GM12878 (cell line): ENCODE measurements at regions of chr2 and their contacts with region 1.

Region 1: DNA sequence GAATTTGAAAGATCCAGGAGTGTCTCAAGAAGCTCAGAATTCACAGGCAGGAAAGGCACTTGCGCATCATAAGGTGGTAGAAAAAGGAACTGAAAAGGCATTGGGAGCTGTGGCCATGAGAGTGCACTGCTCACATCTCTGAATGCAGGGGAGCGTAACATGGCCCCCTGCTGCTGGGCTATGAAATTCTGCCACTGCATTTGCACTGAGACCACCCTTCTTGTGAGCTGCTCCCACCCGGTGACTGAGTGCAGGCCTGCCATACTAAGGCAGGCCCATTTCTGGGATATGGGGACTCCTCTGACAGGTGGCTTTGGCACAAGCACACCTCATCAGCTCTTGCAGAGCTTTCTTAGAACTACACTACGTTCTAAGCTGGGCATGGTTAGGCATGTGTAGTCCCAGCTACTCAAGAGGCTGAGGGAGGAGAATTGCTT is 25.3 kb upstream of the STARD7 start:
- DNase-seq: peak; percentile 68
- ATAC-seq: peak; percentile 99
- H3K4me3 ChIP-seq: no peak overlapping the region
- H3K27ac ChIP-seq: peak overlapping the region; percentile 50
- H3K4me1 ChIP-seq: peaks cover 21% of the 10 kb centered on the region
- H3K27me3 ChIP-seq: no peaks in the 10 kb centered on the region
- CTCF ChIP-seq: peak; percentile 44 to 51 (median 46); a peak in 5 of 6 replicates
- EP300 ChIP-seq: peak in 1 of 2 experiments; percentile 51; a peak in 1 of 4 replicates
- POLR2A ChIP-seq: no peak
- RAD21 ChIP-seq: peak; percentile 48

Region 2: GRCh38 chr2:96157651-96158553 is 76.0 kb before region 1 on chr2:
- CTCF ChIA-PET with region 1: no interaction called
- POLR2A ChIA-PET with region 1: interaction called, 11 read pairs
- RAD21 ChIA-PET with region 1: interaction called, 5 read pairs
- SMC1A ChIA-PET with region 1: interaction called, 4 read pairs
- in situ Hi-C with region 1: no loop called
- intact Hi-C with region 1: no loop called
- DNase-seq: peak; percentile 76
- ATAC-seq: peak; percentile 80
- H3K4me3 ChIP-seq: peak overlapping the region; percentile 21; the same call in 1 of the 2 replicates
- H3K27ac ChIP-seq: peak overlapping the region; percentile 95
- H3K4me1 ChIP-seq: peaks cover 60% of the 10 kb centered on the region
- H3K27me3 ChIP-seq: no peaks in the 10 kb centered on the region
- CTCF ChIP-seq: no peak
- EP300 ChIP-seq: peak; percentile 93 to 95
- POLR2A ChIP-seq: peak; percentile 80
- RAD21 ChIP-seq: peak; percentile 22; the same call in 1 of the 2 replicates

Region 3: GRCh38 chr2:96180521-96180920 is 53.4 kb before region 1 on chr2:
- CTCF ChIA-PET with region 1: interaction called, 27 read pairs
- POLR2A ChIA-PET with region 1: interaction called, 3 read pairs
- RAD21 ChIA-PET with region 1: interaction called, 34 read pairs
- SMC1A ChIA-PET with region 1: interaction called, 34 read pairs
- in situ Hi-C with region 1: no loop called
- intact Hi-C with region 1: no loop called
- DNase-seq: no peak
- ATAC-seq: no peak
- H3K4me3 ChIP-seq: no peak overlapping the region
- H3K27ac ChIP-seq: no peak overlapping the region
- H3K4me1 ChIP-seq: peaks cover 6% of the 10 kb centered on the region
- H3K27me3 ChIP-seq: no peaks in the 10 kb centered on the region
- CTCF ChIP-seq: no peak
- EP300 ChIP-seq: no peak
- POLR2A ChIP-seq: no peak
- RAD21 ChIP-seq: no peak